Naive thymus-derived CD4-positive, alpha-beta T cell (primary cell): ENCODE measurements at regions of chr15 and their contacts with region 1.

Region 1: DNA sequence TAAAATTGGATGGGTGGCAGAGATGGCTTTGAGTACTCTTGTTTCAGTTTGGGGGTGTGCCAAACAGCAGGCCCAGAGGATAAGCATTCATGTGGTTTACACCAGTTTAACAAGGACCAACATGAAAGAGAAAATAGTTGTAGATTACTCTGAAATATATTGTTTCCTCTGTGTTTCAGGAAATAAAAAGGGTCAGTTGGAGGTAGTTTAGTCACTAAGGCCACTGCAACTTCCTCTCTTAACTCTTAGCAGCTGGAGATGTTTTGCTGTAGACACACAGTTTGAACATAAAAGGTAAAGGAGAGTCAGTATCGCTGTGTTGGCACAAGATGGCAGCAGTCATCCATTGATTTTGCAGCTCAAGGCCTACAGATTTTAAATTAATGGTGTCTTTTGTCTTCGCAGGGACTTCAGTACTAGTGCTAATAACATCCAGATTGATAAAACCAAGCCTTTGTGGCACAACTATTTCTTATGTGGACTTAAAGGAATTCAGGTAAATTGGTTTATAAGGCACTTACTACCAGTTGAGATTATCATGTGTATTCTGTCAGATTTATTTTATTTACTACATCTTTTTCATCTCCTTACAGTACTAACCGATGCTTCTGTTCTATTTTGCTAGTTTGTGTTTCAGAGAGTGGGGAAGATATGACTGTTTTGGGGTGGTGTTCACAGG is 65.5 kb downstream of the GALK2 start:
- DNase-seq: peak in 7 of 9 donors; percentile 13 to 51 (median 44)
- ATAC-seq: peak; percentile 87
- H3K4me3 ChIP-seq: no peak overlapping the region
- H3K4me3 Mint-ChIP-seq: no peak overlapping the region
- H3K27ac ChIP-seq: no peak overlapping the region
- H3K27ac Mint-ChIP-seq: peak overlapping the region in 4 of 9 donors; percentile 6 to 67 (median 41)
- H3K4me1 ChIP-seq: no peaks in the 10 kb centered on the region
- H3K4me1 Mint-ChIP-seq: peaks cover 0 to 24% (median 13%) of the 10 kb centered on the region in 7 donors
- H3K27me3 ChIP-seq: no peaks in the 10 kb centered on the region
- H3K27me3 Mint-ChIP-seq: no peaks in the 10 kb centered on the region

Region 2: DNA sequence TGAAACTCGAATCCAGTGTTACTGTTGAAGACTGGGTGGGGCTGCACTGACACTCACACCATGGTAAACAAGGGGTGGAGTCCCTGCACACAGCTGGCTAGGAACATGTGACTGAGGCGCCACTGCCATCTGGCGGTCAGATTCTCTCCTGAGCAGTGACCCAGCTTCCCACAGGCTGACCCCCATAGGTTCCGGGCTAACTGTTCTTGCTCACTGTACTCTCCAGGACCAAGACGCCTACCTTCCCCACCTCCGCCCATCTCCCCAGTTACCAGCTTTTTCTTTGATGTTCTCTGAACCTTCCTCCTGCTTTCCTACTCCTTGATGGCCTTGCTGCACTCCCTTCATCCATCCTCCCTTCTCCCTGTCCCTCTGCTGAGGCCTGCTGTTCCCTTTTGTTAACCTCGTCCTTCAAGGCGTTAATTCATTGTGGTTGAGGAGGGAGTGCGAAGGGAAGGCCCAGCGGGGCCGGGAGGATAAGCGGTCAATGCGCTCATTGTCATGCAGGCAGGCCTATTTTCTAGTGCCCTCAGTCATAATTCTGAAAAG is 768.3 kb after region 1 on chr15:
- CTCF ChIA-PET with region 1: no interaction called
- POLR2A ChIA-PET with region 1: no interaction called
- intact Hi-C with region 1: loop called (anchors 2 kb)
- DNase-seq: peak in 7 of 9 donors; percentile 4 to 48 (median 14)
- ATAC-seq: peak; percentile 98
- H3K4me3 ChIP-seq: no peak overlapping the region
- H3K4me3 Mint-ChIP-seq: peak overlapping the region in 1 of 10 donors; percentile 29
- H3K27ac ChIP-seq: no peak overlapping the region
- H3K27ac Mint-ChIP-seq: peak overlapping the region in 2 of 9 donors; percentile 14 to 78
- H3K4me1 ChIP-seq: peaks cover 0 to 3% of the 10 kb centered on the region in 2 donors
- H3K4me1 Mint-ChIP-seq: peaks cover 0 to 16% (median 0%) of the 10 kb centered on the region in 7 donors
- H3K27me3 ChIP-seq: no peaks in the 10 kb centered on the region
- H3K27me3 Mint-ChIP-seq: peaks cover 0 to 14% (median 11%) of the 10 kb centered on the region in 5 donors

Region 3: DNA sequence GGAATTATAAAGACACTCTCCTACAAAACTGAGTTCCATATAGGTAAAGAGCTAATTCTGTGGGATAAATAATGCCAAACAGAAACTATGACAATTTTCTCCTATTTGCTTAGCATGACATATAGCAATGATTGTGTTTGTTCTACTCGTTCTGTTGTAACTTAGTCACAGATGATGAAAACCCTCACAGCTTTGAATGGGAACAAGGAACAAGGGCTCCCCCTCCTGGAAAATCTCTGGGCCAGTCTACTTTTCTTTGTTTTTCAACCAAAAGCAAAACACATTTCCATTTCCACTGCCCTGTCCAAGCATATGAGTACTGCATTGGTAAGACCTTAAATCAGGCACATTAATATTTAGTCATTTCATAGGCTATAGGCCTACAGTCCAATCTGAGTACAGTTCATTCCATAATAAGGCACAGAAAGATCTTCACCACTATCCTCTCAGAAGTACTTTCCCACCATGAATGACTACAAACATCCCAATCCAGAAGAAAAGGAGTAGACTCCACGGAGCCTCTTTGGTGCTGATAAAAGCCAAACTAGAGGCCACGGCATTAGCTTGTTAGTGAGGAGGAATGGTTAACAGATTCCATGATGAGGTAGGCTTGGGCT is 816.3 kb after region 1 on chr15:
- CTCF ChIA-PET with region 1: no interaction called
- POLR2A ChIA-PET with region 1: no interaction called
- intact Hi-C with region 1: loop called in 1 of 2 experiments (anchors 5 kb)
- DNase-seq: peak in 1 of 9 donors; percentile 1
- ATAC-seq: peak; percentile 50
- H3K4me3 ChIP-seq: no peak overlapping the region
- H3K4me3 Mint-ChIP-seq: no peak overlapping the region
- H3K27ac ChIP-seq: no peak overlapping the region
- H3K27ac Mint-ChIP-seq: peak overlapping the region in 1 of 9 donors; percentile 40
- H3K4me1 ChIP-seq: no peaks in the 10 kb centered on the region
- H3K4me1 Mint-ChIP-seq: peaks cover 0 to 33% (median 0%) of the 10 kb centered on the region in 7 donors
- H3K27me3 ChIP-seq: no peaks in the 10 kb centered on the region
- H3K27me3 Mint-ChIP-seq: peaks cover 0 to 40% (median 12%) of the 10 kb centered on the region in 5 donors

Region 4: DNA sequence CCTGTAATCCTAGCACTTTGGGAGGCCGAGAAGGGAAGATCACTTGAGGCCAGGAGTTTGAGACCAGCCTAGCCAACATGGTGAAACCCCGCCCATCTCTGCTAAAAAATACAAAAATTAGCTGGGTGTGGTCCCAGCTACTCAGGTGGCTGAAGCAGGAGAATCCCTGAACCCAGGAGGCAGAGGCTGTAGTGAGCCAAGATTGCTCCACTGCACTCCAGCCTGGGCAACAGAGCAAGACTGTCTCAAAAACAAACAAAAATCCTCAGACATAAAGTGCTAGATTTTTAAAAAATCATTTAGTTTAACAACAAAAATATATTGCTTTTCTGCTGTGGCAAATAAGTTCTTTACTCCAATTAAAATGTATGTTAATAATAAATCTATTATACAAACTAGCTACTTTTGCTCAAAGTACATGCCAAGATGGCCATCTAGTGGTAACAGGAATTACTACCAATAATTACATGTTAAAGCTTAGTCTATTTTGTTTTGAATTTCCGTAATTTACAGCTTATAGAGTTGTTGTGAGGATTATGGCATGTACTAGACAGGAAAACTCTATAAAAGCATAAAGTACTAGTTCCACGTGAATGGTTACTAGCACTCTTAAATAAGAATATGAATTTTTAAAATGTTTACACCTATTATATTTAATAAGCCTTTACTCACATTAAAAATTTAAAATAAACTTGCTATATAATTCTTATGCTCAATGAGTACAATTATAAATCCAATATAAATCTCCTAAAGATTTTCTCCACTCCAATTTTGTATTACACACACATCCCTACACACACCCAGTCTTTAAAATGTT is 1080.4 kb after region 1 on chr15:
- CTCF ChIA-PET with region 1: interaction called, 4 read pairs
- POLR2A ChIA-PET with region 1: no interaction called
- intact Hi-C with region 1: loop called (anchors 1 to 2 kb)
- DNase-seq: peak in 7 of 9 donors; percentile 8 to 47 (median 30)
- ATAC-seq: peak; percentile 66
- H3K4me3 ChIP-seq: no peak overlapping the region
- H3K4me3 Mint-ChIP-seq: no peak overlapping the region
- H3K27ac ChIP-seq: no peak overlapping the region
- H3K27ac Mint-ChIP-seq: no peak overlapping the region
- H3K4me1 ChIP-seq: peaks cover 0 to 6% of the 10 kb centered on the region in 2 donors
- H3K4me1 Mint-ChIP-seq: peaks cover 12 to 34% (median 21%) of the 10 kb centered on the region in 7 donors
- H3K27me3 ChIP-seq: no peaks in the 10 kb centered on the region
- H3K27me3 Mint-ChIP-seq: no peaks in the 10 kb centered on the region